HepG2 (cell line): ENCODE measurements at regions of chr6 and their contacts with region 1.

Region 1: DNA sequence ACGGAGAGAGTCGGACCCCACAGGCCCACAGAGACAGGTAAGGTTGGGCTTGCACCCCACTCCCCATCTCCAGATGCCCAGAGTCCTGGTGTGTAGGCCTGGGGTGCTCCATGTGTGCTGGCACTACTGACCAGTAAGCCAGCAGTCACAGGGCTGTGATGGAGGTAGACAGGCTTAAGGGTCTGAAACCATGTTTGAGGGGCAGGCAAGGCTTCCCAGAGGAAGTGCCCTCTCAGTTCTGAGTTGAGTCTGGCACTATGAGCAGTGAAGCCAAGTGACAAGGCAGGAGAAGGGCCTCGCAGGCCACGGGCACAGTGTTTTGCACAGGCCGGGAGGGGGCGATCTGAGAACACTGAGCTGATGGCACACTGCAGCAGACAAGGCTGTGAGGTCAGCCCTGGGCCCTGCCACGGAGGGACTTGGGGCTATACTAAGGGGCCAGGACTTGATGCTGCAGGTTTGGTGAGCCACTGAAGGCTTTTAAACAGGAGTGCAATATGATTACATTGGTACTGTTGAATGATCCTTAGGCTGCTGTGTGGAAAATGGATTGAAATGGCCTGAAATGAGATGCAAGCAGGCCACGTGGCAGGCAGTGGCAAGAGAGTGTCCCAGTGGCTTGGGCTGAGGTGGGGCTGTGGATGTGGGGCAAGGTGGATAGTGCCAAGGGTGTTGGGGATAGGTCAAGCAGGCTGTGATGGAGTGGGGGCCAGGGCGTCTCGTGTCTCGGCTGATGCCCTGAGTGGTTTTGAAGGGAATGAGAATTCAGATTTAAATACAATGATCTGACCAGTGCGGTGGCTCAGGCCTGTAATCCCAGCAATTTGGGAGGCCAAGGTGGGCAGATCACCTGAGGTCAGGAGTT is 20.3 kb downstream of the TTBK1 start:
- DNase-seq: peak; percentile 78
- ATAC-seq: peak; percentile 73
- H3K4me3 ChIP-seq: no peak overlapping the region; a peak in 1 of 6 replicates
- H3K27ac ChIP-seq: no peak overlapping the region
- H3K4me1 ChIP-seq: peaks cover 78% of the 10 kb centered on the region
- H3K27me3 ChIP-seq: peaks cover 0 to 4% of the 10 kb centered on the region in 2 experiments; a peak in 2 of 5 replicates
- CTCF ChIP-seq: peak; percentile 100
- EP300 ChIP-seq: 0 out of 4 replicates have a peak, but pooled peaks of 1 of the 2 experiments have one; percentile 12
- POLR2A ChIP-seq: no peak
- RAD21 ChIP-seq: peak; percentile 100

Region 2: DNA sequence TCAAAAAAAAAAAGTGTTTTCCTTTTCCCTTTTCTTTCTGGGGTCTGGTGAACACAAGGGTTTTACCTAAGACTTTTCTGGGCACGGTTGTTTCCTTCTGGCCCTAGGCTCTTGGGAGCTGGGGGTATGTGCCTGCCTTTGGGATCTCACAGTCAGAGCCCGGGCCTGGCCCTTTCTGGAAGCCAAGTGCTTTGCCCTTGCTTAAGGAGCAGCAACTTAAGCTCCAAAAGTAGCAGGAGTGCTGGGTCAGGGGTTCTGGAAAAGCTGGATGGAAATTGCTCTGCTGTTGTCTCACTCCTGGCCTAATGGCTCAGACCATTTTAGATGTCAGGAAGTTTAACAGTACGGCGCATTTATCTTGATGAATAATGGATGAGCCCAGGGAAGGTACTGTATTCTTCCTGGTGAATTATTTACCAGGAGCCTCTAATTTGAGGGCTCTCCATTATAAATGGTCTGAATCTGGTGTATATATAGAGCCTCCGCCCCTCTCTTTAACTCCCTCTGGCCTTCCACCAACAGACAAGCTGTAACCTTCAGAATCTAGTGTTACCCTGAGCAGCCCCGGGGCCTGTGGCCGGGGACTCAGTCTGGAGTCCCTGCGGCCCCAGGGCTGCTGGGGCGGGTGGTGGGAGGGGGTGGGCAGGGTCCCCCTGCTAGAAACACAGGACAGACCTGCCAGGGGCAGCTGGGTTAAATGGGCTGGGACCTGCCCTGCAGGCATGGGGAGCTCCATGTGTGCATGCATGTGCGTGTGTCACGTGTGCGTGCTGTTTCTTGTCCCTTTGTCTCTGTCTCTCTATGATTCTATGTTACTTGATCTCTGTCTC is 149.9 kb before region 1 on chr6:
- CTCF ChIA-PET with region 1: no interaction called
- POLR2A ChIA-PET with region 1: no interaction called
- in situ Hi-C with region 1: no loop called
- intact Hi-C with region 1: no loop called
- DNase-seq: no peak
- ATAC-seq: peak; percentile 58
- H3K4me3 ChIP-seq: no peak overlapping the region
- H3K27ac ChIP-seq: no peak overlapping the region
- H3K4me1 ChIP-seq: peaks cover 40% of the 10 kb centered on the region
- H3K27me3 ChIP-seq: no peaks in the 10 kb centered on the region
- CTCF ChIP-seq: no peak
- EP300 ChIP-seq: no peak
- POLR2A ChIP-seq: no peak
- RAD21 ChIP-seq: no peak

Region 3: DNA sequence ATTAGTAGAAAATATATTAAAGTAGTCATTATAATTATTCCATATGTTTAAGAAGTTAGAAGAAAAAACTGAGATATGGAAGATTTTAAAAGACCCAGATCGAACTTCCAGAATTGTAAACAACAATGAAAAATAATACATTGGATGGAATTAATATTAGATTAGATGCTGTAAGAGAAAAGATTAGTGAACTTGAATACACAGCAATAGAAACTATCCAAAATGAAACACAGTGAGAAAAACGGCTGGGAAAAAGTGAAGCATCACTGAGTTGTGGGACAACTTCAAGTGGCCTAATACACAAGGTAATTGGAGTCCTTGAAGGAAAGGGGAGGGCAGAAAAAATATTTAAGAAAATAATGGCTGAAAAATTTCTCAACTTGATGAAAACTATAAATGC is 24.5 kb before region 1 on chr6:
- CTCF ChIA-PET with region 1: no interaction called
- POLR2A ChIA-PET with region 1: interaction called, 10 read pairs
- in situ Hi-C with region 1: no loop called
- intact Hi-C with region 1: no loop called
- DNase-seq: no peak
- ATAC-seq: no peak
- H3K4me3 ChIP-seq: no peak overlapping the region
- H3K27ac ChIP-seq: no peak overlapping the region
- H3K4me1 ChIP-seq: peaks cover 19% of the 10 kb centered on the region
- H3K27me3 ChIP-seq: peaks cover 7 to 39% of the 10 kb centered on the region in 2 experiments; a peak in 4 of 5 replicates
- CTCF ChIP-seq: no peak
- EP300 ChIP-seq: no peak
- POLR2A ChIP-seq: no peak
- RAD21 ChIP-seq: no peak

Region 4: GRCh38 chr6:43334466-43335095 is 71.0 kb after region 1 on chr6:
- CTCF ChIA-PET with region 1: interaction called, 79 read pairs
- POLR2A ChIA-PET with region 1: interaction called, 8 read pairs
- in situ Hi-C with region 1: loop called (anchors 5 kb)
- intact Hi-C with region 1: loop called (anchors 1 kb)
- DNase-seq: peak; percentile 66
- ATAC-seq: peak; percentile 74
- H3K4me3 ChIP-seq: no peak overlapping the region
- H3K27ac ChIP-seq: no peak overlapping the region
- H3K4me1 ChIP-seq: peaks cover 12% of the 10 kb centered on the region
- H3K27me3 ChIP-seq: no peaks in the 10 kb centered on the region
- CTCF ChIP-seq: peak; percentile 60
- EP300 ChIP-seq: no peak
- POLR2A ChIP-seq: no peak
- RAD21 ChIP-seq: peak; percentile 80

Region 5: DNA sequence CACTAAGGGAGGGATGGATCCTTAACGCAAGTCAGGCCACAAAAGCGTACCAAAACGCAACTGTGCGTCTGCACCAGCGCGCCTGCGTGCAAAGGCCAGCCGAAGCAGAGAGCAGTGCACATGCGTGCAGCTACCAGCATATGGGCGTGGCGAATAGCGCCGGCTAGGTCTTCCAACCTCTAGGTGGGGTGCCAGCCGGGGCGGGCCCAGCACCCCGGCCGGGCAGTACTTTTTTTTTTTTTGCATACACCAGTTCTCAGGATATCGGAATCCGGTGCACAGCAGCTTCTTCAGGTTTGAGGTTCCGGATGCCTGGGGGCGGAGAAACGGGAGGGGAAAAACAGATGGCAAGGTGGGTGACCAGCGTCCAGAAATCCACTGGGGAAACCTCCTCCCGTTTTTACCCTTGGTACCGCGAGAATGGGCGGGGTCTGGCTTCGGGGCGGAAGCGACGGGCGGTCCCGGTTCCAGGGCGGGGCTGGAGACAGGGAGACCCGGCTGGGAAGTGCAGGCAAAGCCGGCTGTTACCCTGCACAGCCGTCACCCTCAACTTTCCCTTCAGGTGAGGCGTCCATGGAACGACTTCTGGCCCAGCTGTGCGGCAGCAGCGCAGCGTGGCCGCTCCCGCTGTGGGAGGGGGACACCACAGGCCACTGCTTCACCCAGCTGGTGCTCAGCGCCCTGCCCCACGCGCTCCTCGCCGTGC is 164.0 kb after region 1 on chr6 and contains the start of gene ABCC10:
- CTCF ChIA-PET with region 1: no interaction called
- POLR2A ChIA-PET with region 1: interaction called, 7 read pairs
- in situ Hi-C with region 1: no loop called
- intact Hi-C with region 1: loop called (anchors 10 kb)
- DNase-seq: peak; percentile 93
- ATAC-seq: peak; percentile 97
- H3K4me3 ChIP-seq: peak within 1 kb of the TSS; percentile 84 to 93 (median 91)
- H3K27ac ChIP-seq: peak within 1 kb of the TSS; percentile 74
- H3K4me1 ChIP-seq: peaks cover 34% of the 10 kb centered on the region
- H3K27me3 ChIP-seq: no peaks in the 10 kb centered on the region; a peak in 1 of 5 replicates
- CTCF ChIP-seq: peak; percentile 74
- EP300 ChIP-seq: no peak
- POLR2A ChIP-seq: peak; percentile 88 to 93
- RAD21 ChIP-seq: peak; percentile 29; the same call in 1 of the 2 replicates
- total RNA-seq, gene ABCC10: 11.2 and 24.3 TPM in 2 replicates

Region 6: GRCh38 chr6:43506667-43507471 is 243.3 kb after region 1 on chr6:
- CTCF ChIA-PET with region 1: no interaction called
- POLR2A ChIA-PET with region 1: no interaction called
- in situ Hi-C with region 1: no loop called
- intact Hi-C with region 1: loop called (anchors 5 kb)
- DNase-seq: peak; percentile 76
- ATAC-seq: peak; percentile 71
- H3K4me3 ChIP-seq: no peak overlapping the region; a peak in 1 of 6 replicates
- H3K27ac ChIP-seq: no peak overlapping the region
- H3K4me1 ChIP-seq: peaks cover 47% of the 10 kb centered on the region
- H3K27me3 ChIP-seq: peaks cover 3 to 7% of the 10 kb centered on the region in 2 experiments; a peak in 4 of 5 replicates
- CTCF ChIP-seq: peak; percentile 98
- EP300 ChIP-seq: no peak
- POLR2A ChIP-seq: no peak
- RAD21 ChIP-seq: peak; percentile 92